Motor neuron (in vitro differentiated cells): ENCODE measurements at regions of chr2 and their contacts with region 1.

Region 1: DNA sequence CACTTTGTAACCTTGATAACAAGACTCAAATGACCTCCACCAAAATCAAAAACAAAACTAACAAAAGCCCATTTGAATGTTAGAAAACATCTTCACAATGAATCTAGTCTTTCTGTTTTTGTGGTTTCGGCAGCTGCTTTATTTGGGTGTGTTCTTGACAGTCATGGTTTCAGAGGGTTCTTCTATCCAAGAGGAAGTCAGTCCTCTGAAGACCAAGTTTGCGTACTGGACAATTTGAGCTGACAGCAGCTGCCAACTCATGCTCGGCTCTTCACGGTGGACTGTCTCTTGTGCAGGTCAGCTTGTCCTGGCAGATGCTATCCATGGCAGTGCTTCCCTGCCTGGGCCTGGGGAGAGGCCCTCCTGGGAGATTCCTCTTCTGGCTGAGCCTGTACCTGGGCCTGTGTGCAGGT is 91.0 kb downstream of the TMEM17 start:
- ATAC-seq: no peak
- H3K4me3 ChIP-seq: no peak overlapping the region
- H3K27ac ChIP-seq: no peak overlapping the region
- H3K4me1 ChIP-seq: peaks cover 8% of the 10 kb centered on the region in 2 donors

Region 2: DNA sequence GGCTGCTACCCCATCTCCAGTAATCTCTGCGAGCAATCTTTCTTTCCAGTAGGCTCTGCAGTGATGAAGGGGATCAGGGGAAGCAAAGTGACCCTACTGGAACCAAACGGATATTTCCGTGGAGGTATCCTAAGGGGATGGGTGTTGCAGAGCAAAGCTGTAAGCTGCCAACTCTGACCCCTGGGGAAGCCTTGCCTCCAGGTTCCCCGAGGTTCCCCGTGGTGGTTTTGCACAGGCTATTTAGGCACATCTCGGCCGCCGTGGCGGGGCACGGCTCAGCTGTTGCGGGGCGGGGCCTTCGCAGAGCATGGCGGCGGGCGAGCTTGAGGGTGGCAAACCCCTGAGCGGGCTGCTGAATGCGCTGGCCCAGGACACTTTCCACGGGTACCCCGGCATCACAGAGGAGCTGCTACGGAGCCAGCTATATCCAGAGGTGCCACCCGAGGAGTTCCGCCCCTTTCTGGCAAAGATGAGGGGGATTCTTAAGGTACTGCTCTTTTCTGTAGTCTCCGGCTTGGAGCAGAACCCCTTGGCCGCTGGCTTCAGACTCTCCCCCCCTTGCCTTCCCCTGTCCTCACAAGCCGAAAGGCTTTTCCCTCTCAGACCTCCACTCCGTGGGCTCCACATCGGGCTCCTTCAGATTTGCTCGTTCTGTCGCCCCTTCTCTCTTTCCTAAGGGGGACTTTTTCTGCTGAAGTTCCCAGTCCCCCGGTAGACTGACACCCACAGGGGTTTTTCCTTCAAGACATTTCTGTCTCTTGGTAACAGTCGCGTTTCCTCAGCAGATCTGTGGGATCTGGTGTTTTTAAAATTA is 509.4 kb before region 1 on chr2 and contains the start of gene COMMD1:
- in situ Hi-C with region 1: loop called in 7 of 9 experiments (anchors 10 to 25 kb)
- ATAC-seq: peak; percentile 98 to 99 (median 99)
- H3K4me3 ChIP-seq: peak within 1 kb of the TSS; percentile 86 to 97 (median 88)
- H3K27ac ChIP-seq: peak within 1 kb of the TSS; percentile 34 to 48
- H3K4me1 ChIP-seq: peaks cover 0 to 3% of the 10 kb centered on the region in 2 donors
- total RNA-seq, gene COMMD1: 23.6 to 48.6 (median 32.5) TPM

Region 3: DNA sequence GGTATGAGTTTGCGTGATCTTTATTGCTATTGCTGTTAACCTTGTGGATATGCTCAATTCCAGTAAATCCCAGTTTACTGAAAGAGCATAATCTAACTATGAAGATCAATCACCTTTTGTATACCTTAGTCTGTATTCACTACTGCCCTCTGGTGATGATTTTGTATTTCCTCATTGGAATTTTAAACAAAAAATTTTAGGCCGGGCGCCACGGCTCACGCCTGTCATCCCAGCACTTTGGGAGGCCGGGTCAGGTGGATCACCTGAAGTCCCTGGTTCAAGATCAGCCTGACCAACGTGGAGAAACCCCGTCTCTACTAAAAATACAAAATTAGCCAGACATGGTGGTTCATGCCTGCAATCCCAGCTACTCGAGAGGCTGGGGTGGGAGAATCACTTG is 504.4 kb before region 1 on chr2:
- in situ Hi-C with region 1: loop called in 7 of 9 experiments (anchors 10 to 25 kb)
- ATAC-seq: no peak
- H3K4me3 ChIP-seq: no peak overlapping the region
- H3K27ac ChIP-seq: no peak overlapping the region
- H3K4me1 ChIP-seq: peaks cover 0 to 3% of the 10 kb centered on the region in 2 donors

Region 4: DNA sequence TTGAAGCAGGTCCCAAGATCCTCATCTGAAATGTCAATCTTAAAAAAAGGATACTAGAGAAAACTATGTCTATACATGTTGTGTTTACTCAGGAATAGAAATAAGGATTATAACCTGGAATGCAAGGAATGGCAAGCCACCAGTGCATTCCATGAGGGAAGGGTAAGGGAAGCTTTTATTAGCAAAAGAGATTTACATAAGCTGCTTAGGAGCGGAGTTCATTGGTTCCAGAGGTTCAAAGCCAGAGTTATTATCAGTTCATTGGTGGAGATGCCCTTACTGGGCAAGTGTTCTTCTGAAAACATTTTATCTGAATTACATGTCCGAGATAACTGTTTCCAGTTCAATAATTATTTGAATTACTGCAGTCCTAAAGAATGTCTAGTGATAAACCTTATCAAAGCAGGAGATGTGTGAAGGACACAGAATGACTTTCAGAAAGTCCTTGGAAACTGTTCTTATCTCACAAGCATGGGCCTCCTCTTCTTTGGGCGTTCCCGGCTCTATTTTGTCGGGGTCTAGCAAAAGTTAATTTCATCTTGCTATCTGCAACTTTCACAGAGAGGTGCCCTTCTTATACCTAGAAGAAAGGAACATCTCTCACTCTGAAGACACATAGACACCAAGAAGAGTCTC is 486.1 kb before region 1 on chr2:
- in situ Hi-C with region 1: loop called in 5 of 9 experiments (anchors 10 to 25 kb)
- ATAC-seq: peak in 2 of 8 experiments; percentile 46 to 89
- H3K4me3 ChIP-seq: no peak overlapping the region
- H3K27ac ChIP-seq: no peak overlapping the region
- H3K4me1 ChIP-seq: no peaks in the 10 kb centered on the region

Region 5: GRCh38 chr2:61993444-61994024 is 421.5 kb before region 1 on chr2:
- in situ Hi-C with region 1: loop called in 4 of 9 experiments (anchors 10 to 25 kb)
- ATAC-seq: peak in 4 of 8 experiments; percentile 43 to 75 (median 70)
- H3K4me3 ChIP-seq: no peak overlapping the region
- H3K27ac ChIP-seq: no peak overlapping the region
- H3K4me1 ChIP-seq: no peaks in the 10 kb centered on the region